AG04449 (cell line): ENCODE measurements at regions of chr5 and their contacts with region 1.

Region 1: GRCh38 chr5:72108202-72109061 is 1.2 kb downstream of the MAP1B start:
- DNase-seq: no peak
- H3K4me3 ChIP-seq: peak overlapping the region; percentile 90
- CTCF ChIP-seq: no peak

Region 2: GRCh38 chr5:72125941-72126620 is 17.6 kb after region 1 on chr5:
- CTCF ChIA-PET with region 1: interaction called, 12 read pairs
- POLR2A ChIA-PET with region 1: no interaction called
- DNase-seq: no peak
- H3K4me3 ChIP-seq: no peak overlapping the region
- CTCF ChIP-seq: no peak